IMR-90 (cell line): ENCODE measurements at regions of chr15 and their contacts with region 1.

Region 1: DNA sequence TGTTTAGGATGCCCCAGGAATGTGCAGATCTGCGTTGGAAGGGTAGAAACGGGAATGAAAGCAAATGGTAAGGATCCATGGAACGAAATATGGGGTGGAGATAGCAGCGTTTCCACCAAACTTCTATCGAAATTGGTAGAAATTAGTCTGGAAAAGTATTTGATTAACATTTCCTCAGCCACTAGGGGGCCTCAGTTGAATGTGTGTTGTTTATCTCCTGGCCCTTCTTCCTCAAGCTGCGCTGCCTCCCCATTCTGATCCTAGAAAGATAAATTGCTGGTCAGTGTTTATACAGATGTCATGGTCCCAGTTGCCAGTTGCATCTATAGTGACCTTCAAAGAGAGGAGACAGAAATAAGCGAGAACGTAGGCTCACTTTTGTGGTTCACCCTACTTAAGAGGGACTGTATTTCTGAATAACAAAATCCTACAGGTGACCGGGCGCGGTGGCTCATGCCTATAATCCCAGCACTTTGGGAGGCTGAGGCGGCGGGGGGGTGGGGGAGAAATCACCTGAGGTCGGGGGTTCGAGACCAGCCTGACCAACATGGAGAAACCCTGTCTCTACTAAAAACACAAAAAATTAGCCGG is 457.1 kb downstream of the SQOR start:
- DNase-seq: peak; percentile 47
- ATAC-seq: 0 out of 2 replicates have a peak, but pooled peaks have one; percentile 32
- H3K4me3 ChIP-seq: no peak overlapping the region; the same call in 1 of the 2 replicates
- H3K27ac ChIP-seq: no peak overlapping the region
- H3K4me1 ChIP-seq: 0 out of 2 replicates have a peak, but pooled peaks cover 2% of the 10 kb centered on the region
- H3K27me3 ChIP-seq: no peaks in the 10 kb centered on the region
- CTCF ChIP-seq: peak; percentile 48
- POLR2A ChIP-seq: no peak
- RAD21 ChIP-seq: peak; percentile 60

Region 2: GRCh38 chr15:45948181-45948621 is 143.8 kb before region 1 on chr15:
- CTCF ChIA-PET with region 1: no interaction called
- POLR2A ChIA-PET with region 1: no interaction called
- dilution Hi-C with region 1: no loop called
- in situ Hi-C with region 1: no loop called
- intact Hi-C with region 1: no loop called
- DNase-seq: no peak
- ATAC-seq: no peak
- H3K4me3 ChIP-seq: no peak overlapping the region
- H3K27ac ChIP-seq: no peak overlapping the region
- H3K4me1 ChIP-seq: no peaks in the 10 kb centered on the region
- H3K27me3 ChIP-seq: no peaks in the 10 kb centered on the region
- CTCF ChIP-seq: no peak
- POLR2A ChIP-seq: no peak
- RAD21 ChIP-seq: no peak

Region 3: DNA sequence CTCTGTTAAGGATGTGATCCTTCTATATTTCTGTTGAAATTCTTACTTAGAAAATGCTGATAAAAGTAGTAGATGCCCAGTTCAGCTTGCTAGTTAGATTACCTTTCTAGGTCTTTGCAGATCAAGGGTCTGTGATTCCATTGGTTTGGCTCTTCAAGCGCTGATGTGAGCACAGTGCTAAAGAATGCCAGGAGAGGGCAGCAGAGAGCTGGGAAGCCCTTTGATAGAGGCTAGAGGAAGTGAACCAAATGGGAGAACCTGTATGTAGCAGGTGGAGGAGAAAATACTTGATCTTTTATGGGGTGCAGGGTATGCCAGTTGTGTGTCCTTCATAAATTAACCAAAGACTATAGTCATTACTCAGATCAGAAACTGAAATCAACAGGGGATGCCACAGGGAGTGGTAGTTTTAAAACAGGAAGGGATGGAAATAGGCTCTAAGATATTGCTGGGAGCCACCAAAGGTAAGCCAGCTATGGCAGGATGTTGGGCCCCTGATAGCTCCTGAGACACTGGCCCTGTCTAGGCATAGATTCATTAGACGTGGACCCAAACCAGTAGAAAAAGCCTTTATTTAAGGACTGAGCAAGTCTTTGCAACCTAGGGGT is 220.3 kb after region 1 on chr15:
- CTCF ChIA-PET with region 1: interaction called, 3 read pairs
- POLR2A ChIA-PET with region 1: no interaction called
- dilution Hi-C with region 1: no loop called
- in situ Hi-C with region 1: no loop called
- intact Hi-C with region 1: loop called (anchors 5 kb)
- DNase-seq: peak; percentile 41
- ATAC-seq: peak; percentile 77
- H3K4me3 ChIP-seq: no peak overlapping the region
- H3K27ac ChIP-seq: no peak overlapping the region
- H3K4me1 ChIP-seq: no peaks in the 10 kb centered on the region
- H3K27me3 ChIP-seq: no peaks in the 10 kb centered on the region
- CTCF ChIP-seq: peak; percentile 72
- POLR2A ChIP-seq: no peak
- RAD21 ChIP-seq: peak; percentile 67